Left ventricle myocardium inferior (tissue), 1 donor: ENCODE measurements at regions of chr2 and their contacts with region 1.

Region 1: DNA sequence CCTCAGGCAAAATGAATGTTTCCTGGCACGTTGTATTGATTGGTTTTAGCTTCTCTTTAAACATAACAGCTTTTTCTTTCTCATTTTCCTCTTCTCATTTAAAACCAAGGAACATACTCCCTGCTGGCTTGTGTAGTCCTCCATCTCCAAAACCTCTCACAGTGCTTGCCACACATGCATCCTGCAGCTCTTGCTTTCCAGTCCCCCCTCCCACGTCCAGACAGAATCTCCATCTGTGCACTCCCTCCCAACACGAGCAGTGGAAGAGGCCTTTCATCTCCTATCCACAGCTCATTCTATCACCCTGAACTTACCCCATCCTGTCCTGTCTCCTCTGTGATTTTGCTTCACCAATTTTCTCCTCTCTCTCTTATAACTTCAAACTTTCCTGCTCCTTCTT is 99.6 kb upstream of the THSD7B start:
- DNase-seq: no peak
- H3K4me3 ChIP-seq: no peak overlapping the region
- H3K27ac ChIP-seq: no peak overlapping the region
- H3K4me1 ChIP-seq: no peaks in the 10 kb centered on the region
- H3K27me3 ChIP-seq: no peaks in the 10 kb centered on the region
- CTCF ChIP-seq: no peak

Region 2: GRCh38 chr2:136423516-136423996 is 242.2 kb before region 1 on chr2:
- intact Hi-C with region 1: loop called (anchors 5 kb)
- DNase-seq: peak; percentile 63
- H3K4me3 ChIP-seq: peak overlapping the region; percentile 59
- H3K27ac ChIP-seq: no peak overlapping the region
- H3K4me1 ChIP-seq: peaks cover 7% of the 10 kb centered on the region
- H3K27me3 ChIP-seq: peaks cover 77% of the 10 kb centered on the region
- CTCF ChIP-seq: peak; percentile 89

Region 3: DNA sequence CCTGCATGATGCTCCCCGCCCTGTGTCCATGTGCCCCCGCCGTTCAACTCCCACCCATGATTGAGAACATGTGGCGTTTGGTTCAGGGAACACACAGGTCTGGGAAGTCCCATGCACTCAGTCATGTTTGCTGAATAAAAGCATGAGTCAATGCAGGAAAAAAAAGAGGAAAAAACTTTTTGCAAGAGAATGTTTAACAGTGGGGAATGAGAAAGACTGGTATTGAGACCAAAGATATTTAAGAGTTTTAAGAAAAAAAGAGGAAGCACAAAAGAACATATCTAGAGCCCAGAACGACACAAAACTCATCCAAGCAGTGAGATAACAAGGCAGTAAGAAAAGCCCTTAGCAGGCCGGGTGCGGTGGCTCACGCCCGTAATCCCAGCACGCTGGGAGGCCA is 179.6 kb before region 1 on chr2:
- intact Hi-C with region 1: no loop called
- DNase-seq: no peak
- H3K4me3 ChIP-seq: no peak overlapping the region
- H3K27ac ChIP-seq: no peak overlapping the region
- H3K4me1 ChIP-seq: no peaks in the 10 kb centered on the region
- H3K27me3 ChIP-seq: no peaks in the 10 kb centered on the region
- CTCF ChIP-seq: no peak

Region 4: DNA sequence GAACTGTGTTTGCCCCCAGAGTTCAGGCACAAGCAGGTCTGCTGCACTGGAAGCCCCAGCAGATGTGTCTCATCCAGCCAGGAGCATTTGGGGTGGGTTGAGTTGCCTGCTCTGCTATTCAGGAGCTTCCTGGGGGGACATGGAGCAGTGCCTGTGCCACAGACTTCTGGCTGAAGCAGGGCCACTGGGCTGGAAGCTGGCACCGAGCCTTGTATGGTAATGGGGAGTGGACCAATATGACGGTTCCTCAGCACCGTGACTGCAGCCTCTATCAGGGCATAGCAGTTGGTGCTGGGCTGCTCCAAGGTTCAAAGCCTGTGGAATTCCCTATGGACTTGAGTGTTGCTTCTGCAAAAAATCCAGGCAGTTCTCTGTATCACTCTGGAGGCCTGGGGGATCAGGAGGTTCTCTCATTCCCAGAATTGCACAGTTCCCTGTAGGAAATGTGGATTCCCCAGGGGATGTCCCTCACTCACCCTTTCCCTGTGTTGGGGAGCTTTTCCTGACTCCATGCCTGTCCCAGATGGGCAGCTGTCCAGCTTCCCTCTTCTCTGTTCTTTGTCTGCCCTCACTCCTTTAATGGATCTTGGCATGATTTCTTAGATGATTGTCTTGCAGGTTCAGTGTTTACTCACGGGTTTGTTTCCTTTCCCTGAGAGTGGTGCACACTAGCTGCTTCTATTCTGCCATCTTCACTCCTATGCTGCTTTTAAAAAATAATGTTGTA is 62.4 kb after region 1 on chr2:
- intact Hi-C with region 1: loop called (anchors 2 kb)
- DNase-seq: no peak
- H3K4me3 ChIP-seq: no peak overlapping the region
- H3K27ac ChIP-seq: no peak overlapping the region
- H3K4me1 ChIP-seq: no peaks in the 10 kb centered on the region
- H3K27me3 ChIP-seq: no peaks in the 10 kb centered on the region
- CTCF ChIP-seq: no peak

Region 5: DNA sequence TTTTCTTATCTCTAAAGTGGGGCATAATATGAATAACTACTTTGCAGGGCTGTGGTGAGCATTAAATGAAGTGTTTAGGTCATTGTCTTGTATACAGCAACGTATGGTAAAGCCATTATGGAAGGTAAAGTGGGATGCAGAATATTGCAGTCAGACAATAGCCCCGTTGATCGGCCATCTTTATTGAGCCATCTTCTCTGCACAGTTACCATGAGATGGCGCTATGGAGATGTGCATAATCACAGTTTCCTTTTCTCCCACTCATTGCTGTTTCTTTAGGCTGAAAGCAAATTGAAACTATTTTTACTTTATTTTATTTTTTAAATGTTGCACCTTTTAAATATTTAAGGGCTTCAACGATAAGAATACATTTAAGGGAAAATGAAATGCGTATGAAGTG is 208.5 kb after region 1 on chr2:
- intact Hi-C with region 1: no loop called
- DNase-seq: no peak
- H3K4me3 ChIP-seq: no peak overlapping the region
- H3K27ac ChIP-seq: no peak overlapping the region
- H3K4me1 ChIP-seq: no peaks in the 10 kb centered on the region
- H3K27me3 ChIP-seq: no peaks in the 10 kb centered on the region
- CTCF ChIP-seq: peak; percentile 51